Ascending aorta (tissue), 2 donors: ENCODE measurements at regions of chr3 and their contacts with region 1.

Region 1: DNA sequence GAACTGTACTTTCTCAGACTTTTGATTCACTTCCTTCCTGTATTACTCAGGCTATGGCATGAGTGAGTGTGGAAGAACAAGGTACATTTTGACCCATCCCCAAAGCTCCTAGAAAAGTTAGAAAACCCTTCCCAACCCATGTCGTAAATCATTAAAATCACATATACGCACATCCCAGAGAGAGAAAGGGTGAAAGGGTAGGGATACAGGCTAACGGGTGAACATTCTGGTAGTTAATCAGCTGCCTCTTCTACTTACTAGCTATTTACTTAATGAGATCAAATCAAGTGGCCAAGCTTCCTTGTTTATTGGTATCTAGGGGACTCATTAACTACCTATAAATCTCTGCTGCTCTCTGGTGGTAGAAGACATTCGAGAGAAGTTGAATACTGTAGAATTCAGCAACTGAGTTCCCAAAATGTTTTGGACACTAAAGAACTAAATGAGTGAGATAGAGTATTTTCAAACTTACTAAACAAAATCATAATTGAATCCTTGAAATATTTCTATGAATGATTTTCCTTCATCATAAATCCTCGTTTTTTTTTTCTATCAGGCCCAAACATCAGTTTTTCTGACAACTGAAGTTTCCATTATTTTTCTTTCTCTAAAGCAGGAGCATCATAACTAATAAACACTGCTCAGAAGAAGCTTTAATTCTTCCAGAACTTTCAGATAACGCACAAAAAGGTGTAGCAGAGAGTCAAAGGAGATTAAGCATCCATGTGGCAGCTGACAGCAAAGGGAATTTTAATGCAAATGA is 124.2 kb downstream of the IMPG2 start:
- DNase-seq: no peak
- H3K4me3 ChIP-seq: no peak overlapping the region
- H3K27ac ChIP-seq: no peak overlapping the region
- H3K4me1 ChIP-seq: no peaks in the 10 kb centered on the region
- H3K27me3 ChIP-seq: no peaks in the 10 kb centered on the region
- CTCF ChIP-seq: peak; percentile 38 to 72 (median 43)

Region 2: GRCh38 chr3:100756441-100756840 is 439.7 kb before region 1 on chr3:
- intact Hi-C with region 1: loop called (anchors 10 kb)
- DNase-seq: peak in 1 of 2 donors; percentile 75
- H3K4me3 ChIP-seq: no peak overlapping the region
- H3K27ac ChIP-seq: peak overlapping the region; percentile 9 to 47
- H3K4me1 ChIP-seq: peaks cover 0 to 9% of the 10 kb centered on the region in 2 donors
- H3K27me3 ChIP-seq: no peaks in the 10 kb centered on the region
- CTCF ChIP-seq: no peak

Region 3: GRCh38 chr3:100893590-100893989 is 302.5 kb before region 1 on chr3:
- intact Hi-C with region 1: loop called (anchors 1 kb)
- DNase-seq: no peak
- H3K4me3 ChIP-seq: no peak overlapping the region
- H3K27ac ChIP-seq: no peak overlapping the region
- H3K4me1 ChIP-seq: no peaks in the 10 kb centered on the region
- H3K27me3 ChIP-seq: no peaks in the 10 kb centered on the region
- CTCF ChIP-seq: peak; percentile 11 to 58 (median 39)

Region 4: GRCh38 chr3:101391413-101391950 is 195.3 kb after region 1 on chr3:
- intact Hi-C with region 1: no loop called
- DNase-seq: no peak
- H3K4me3 ChIP-seq: no peak overlapping the region
- H3K27ac ChIP-seq: no peak overlapping the region
- H3K4me1 ChIP-seq: peaks cover 0 to 3% of the 10 kb centered on the region in 2 donors
- H3K27me3 ChIP-seq: no peaks in the 10 kb centered on the region
- CTCF ChIP-seq: no peak